Panc1 (cell line): ENCODE measurements at regions of chr22 and their contacts with region 1.

Region 1: DNA sequence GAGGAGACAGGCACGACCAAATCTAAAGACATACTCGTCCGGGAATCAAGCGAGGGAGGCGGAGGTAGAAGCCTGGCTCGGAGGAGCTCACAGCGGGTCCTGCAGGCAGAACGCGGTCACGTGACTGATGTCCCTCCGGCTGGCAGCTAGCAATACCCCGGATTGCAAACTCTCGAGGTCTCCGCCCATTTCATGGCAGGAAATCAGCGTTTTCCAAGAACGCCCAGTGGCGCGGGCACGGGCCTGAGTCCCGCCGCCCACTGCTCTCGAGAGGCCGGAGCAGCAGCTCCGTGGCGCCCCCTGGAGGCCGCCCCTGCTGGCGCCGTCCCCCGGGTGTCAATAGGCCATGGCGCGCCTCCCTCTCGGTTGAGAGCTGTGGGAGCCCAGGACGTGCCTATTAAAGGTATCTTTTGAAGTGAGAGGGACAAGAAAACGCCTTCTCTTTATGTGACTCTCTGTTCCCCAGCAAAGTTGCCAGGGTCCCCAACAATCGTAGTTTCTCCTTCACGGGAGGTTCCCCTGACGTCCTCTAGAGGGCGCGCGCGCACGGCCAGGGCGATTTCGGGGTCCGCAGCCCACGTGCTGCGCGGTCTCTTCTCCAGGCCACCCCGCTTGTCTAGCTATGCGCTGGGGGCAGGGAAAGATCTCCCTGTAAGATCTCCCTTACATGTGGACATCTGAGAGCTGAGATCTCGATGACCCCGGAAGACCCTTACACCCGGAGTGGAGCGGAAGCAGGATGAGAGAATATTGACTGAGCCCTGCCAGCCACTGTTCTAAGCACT is 37.3 kb upstream of the RBFOX2 start:
- DNase-seq: peak; percentile 48
- ATAC-seq: peak; percentile 94
- H3K4me3 ChIP-seq: peak overlapping the region; percentile 52 to 77
- H3K27ac ChIP-seq: peak overlapping the region; percentile 84
- H3K4me1 ChIP-seq: no peaks in the 10 kb centered on the region
- H3K27me3 ChIP-seq: no peaks in the 10 kb centered on the region
- CTCF ChIP-seq: peak; percentile 99

Region 2: DNA sequence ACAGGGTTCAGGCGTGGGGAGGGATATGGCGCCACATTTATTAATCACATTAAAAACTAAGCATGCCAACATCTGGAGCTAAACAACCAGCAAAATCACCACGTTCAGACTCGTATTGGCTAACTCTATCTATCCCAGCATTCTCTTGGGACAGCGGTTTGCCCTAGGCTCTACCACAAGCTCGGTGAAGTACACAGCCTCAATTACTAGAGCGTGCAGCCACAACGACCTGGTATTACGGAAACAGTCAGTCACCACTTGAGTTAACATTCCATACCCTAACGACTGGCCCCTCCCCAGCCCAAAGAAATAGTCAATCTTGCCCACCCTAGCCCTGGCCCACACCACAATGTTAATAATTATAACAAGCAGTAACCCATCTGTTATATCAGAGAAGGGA is 316.2 kb before region 1 on chr22:
- CTCF ChIA-PET with region 1: no interaction called
- POLR2A ChIA-PET with region 1: no interaction called
- in situ Hi-C with region 1: no loop called
- intact Hi-C with region 1: no loop called
- DNase-seq: no peak
- ATAC-seq: no peak
- H3K4me3 ChIP-seq: no peak overlapping the region
- H3K27ac ChIP-seq: no peak overlapping the region
- H3K4me1 ChIP-seq: no peaks in the 10 kb centered on the region; the same call in 1 of the 2 replicates
- H3K27me3 ChIP-seq: no peaks in the 10 kb centered on the region
- CTCF ChIP-seq: no peak

Region 3: DNA sequence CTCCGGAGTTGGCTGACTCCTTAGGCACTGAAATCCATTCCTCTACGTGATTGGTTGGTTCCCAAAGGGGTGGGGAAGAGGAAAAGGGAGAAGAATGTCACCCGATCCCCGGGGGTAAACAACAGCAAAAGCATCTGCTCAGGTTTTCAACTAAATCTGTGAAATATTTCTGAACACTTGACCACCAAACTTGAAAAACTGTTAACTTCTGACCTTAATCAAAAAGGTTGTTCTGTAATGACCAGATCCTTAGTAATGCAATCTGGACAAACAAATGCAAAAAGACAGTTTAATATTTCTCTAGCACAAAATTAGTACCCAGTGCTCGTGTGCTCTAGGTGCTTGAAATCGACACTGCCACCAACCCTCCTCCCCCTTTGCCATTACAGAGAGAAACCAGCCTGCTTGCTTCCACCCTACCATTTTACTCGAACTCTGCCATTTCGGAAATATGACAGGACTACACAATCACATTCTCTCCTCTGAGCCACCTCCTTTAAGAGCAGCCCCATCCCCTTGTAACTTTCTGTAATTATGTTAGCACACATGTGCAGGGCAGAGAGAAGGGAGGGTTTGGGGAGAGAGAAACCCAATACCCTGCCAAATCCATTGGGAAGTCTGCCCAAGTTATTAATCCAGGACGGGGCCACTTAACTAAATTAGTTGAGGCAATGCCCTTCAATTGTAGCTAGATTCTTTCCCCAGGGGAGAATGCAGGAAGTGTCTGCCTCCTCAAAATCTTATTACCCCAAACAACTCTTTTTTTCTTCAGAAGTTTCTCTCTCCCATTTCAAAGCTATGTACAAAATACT is 151.1 kb before region 1 on chr22:
- CTCF ChIA-PET with region 1: no interaction called
- POLR2A ChIA-PET with region 1: no interaction called
- in situ Hi-C with region 1: no loop called
- intact Hi-C with region 1: no loop called
- DNase-seq: peak; percentile 30
- ATAC-seq: peak; percentile 91
- H3K4me3 ChIP-seq: peak overlapping the region; percentile 31 to 56
- H3K27ac ChIP-seq: peak overlapping the region; percentile 74
- H3K4me1 ChIP-seq: peaks cover 17% of the 10 kb centered on the region
- H3K27me3 ChIP-seq: no peaks in the 10 kb centered on the region
- CTCF ChIP-seq: no peak

Region 4: GRCh38 chr22:35930933-35931332 is 135.0 kb before region 1 on chr22:
- CTCF ChIA-PET with region 1: interaction called, 3 read pairs
- POLR2A ChIA-PET with region 1: no interaction called
- in situ Hi-C with region 1: no loop called
- intact Hi-C with region 1: loop called (anchors 10 kb)
- DNase-seq: peak; percentile 35
- ATAC-seq: peak; percentile 91
- H3K4me3 ChIP-seq: no peak overlapping the region
- H3K27ac ChIP-seq: no peak overlapping the region
- H3K4me1 ChIP-seq: no peaks in the 10 kb centered on the region
- H3K27me3 ChIP-seq: no peaks in the 10 kb centered on the region
- CTCF ChIP-seq: peak; percentile 66

Region 5: GRCh38 chr22:36110306-36110881 is 44.4 kb after region 1 on chr22:
- CTCF ChIA-PET with region 1: no interaction called
- POLR2A ChIA-PET with region 1: interaction called, 11 read pairs
- in situ Hi-C with region 1: no loop called
- intact Hi-C with region 1: no loop called
- DNase-seq: no peak
- ATAC-seq: no peak
- H3K4me3 ChIP-seq: no peak overlapping the region
- H3K27ac ChIP-seq: no peak overlapping the region
- H3K4me1 ChIP-seq: no peaks in the 10 kb centered on the region
- H3K27me3 ChIP-seq: no peaks in the 10 kb centered on the region
- CTCF ChIP-seq: no peak

Region 6: GRCh38 chr22:36123673-36124630 is 58.0 kb after region 1 on chr22:
- CTCF ChIA-PET with region 1: interaction called, 3 read pairs
- POLR2A ChIA-PET with region 1: no interaction called
- in situ Hi-C with region 1: no loop called
- intact Hi-C with region 1: loop called (anchors 2 kb)
- DNase-seq: peak; percentile 52
- ATAC-seq: peak; percentile 95
- H3K4me3 ChIP-seq: peak overlapping the region; percentile 31 to 54
- H3K27ac ChIP-seq: peak overlapping the region; percentile 78
- H3K4me1 ChIP-seq: no peaks in the 10 kb centered on the region
- H3K27me3 ChIP-seq: no peaks in the 10 kb centered on the region; the same call in 1 of the 2 replicates
- CTCF ChIP-seq: peak; percentile 92